Endothelial cell of umbilical vein (primary cell): ENCODE measurements at regions of chr4 and their contacts with region 1.

Region 1: DNA sequence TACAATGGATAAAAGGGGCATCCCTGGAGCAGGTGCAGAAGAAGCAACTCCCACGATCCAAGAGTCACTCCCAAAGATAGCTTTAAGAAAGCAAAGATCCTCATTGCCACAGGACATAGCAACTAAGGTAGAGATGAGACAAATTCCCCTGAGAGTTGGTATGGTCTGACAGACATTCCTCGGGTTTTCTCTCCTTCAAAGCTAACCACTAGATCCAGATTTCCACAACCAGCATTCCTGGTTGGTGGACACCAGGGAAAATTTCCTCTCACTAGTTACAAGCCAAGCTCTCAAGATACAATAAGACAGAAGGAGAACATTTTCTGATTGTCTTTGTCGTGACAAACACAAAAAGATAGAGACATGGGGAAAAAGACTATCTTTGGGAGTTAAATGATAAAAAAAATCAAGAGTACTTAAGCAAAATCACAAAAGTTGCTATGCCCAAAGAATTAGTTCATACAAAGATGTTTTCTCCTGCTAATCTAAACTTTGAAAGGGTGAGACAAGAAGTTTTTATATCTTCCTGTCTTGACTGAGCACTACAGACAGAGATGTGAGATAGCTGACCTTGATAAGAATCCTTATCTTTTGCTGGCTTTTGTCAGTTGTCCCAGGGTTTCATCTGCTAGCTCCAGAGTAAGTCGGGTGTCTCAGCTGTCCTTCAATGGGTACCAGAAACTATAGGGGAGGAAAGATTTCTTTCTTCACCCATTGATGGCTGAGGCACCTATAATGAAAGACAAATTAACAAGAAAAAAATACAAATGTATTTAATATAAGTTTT is 200.5 kb downstream of the CENPC start:
- DNase-seq: no peak
- H3K4me3 ChIP-seq: no peak overlapping the region
- H3K27ac ChIP-seq: no peak overlapping the region
- H3K4me1 ChIP-seq: no peaks in the 10 kb centered on the region
- H3K27me3 ChIP-seq: peaks cover 0 to 4% of the 10 kb centered on the region in 2 experiments
- CTCF ChIP-seq: no peak
- POLR2A ChIP-seq: no peak

Region 2: GRCh38 chr4:67320645-67321044 is 24.1 kb before region 1 on chr4:
- CTCF ChIA-PET with region 1: no interaction called
- POLR2A ChIA-PET with region 1: no interaction called
- dilution Hi-C with region 1: no loop called
- intact Hi-C with region 1: loop called (anchors 1 kb)
- DNase-seq: no peak
- H3K4me3 ChIP-seq: no peak overlapping the region
- H3K27ac ChIP-seq: no peak overlapping the region
- H3K4me1 ChIP-seq: no peaks in the 10 kb centered on the region
- H3K27me3 ChIP-seq: no peaks in the 10 kb centered on the region
- CTCF ChIP-seq: no peak
- POLR2A ChIP-seq: no peak